HCT116 (cell line): ENCODE measurements at regions of chr7 and their contacts with region 1.

Region 1: GRCh38 chr7:116180302-116180701 is 30.0 kb upstream of the TES start:
- DNase-seq: peak; percentile 43
- ATAC-seq: peak; percentile 85
- H3K4me3 ChIP-seq: no peak overlapping the region
- H3K27ac ChIP-seq: no peak overlapping the region
- H3K4me1 ChIP-seq: no peaks in the 10 kb centered on the region
- H3K27me3 ChIP-seq: no peaks in the 10 kb centered on the region
- CTCF ChIP-seq: peak; percentile 76 to 89 (median 83)
- POLR2A ChIP-seq: no peak
- RAD21 ChIP-seq: peak; percentile 94

Region 2: GRCh38 chr7:116122972-116123595 is 57.2 kb before region 1 on chr7:
- CTCF ChIA-PET with region 1: no interaction called
- POLR2A ChIA-PET with region 1: no interaction called
- RAD21 ChIA-PET with region 1: no interaction called
- intact Hi-C with region 1: no loop called
- DNase-seq: peak; percentile 32
- ATAC-seq: no peak; the same call in 1 of the 2 replicates
- H3K4me3 ChIP-seq: no peak overlapping the region
- H3K27ac ChIP-seq: no peak overlapping the region
- H3K4me1 ChIP-seq: no peaks in the 10 kb centered on the region
- H3K27me3 ChIP-seq: no peaks in the 10 kb centered on the region
- CTCF ChIP-seq: peak; percentile 46 to 79 (median 73); a peak in 5 of 6 replicates
- POLR2A ChIP-seq: no peak
- RAD21 ChIP-seq: peak; percentile 79

Region 3: DNA sequence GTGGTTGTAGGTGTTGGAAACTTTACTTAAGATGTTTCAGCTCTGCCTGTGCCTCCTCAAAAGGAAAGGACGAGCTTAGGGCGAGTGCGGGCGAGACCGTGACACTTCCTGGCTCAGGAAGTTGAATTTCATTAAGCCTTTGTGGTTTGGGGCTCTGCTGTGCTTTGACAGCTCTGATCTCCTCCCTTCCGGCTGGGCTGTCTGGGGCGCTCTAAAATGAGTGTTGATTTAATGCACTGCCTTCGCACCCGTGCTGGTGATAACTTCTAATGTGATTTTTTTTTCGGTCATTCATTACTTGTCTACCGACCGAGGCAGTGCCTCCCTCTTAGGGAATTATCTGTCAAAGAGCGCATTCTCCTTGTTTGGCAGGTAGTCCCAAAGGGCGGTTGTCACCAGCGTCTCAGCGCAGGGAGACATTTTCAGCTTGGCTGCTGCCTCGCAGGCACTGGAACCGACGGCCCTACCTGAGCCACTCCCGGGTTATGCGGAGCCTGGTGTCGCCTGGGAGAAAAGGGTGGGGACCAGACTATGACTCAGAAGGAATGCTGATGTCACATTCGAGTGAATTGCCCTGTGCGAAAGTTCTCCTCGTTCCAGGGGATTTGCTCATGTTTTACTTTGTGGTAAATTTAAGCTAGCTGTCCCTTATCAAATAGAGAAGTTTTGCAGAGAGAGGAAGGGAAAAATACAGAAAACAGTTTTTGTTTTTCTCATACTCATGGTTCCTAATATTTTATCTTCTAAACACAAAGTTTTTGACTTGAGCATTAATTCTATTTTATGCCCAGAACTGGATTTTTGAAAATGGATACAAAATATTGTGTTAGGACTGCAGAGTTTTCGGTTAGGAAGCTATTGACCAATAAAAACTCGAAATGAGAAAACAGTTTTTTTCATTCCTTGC is 31.0 kb after region 1 on chr7:
- CTCF ChIA-PET with region 1: interaction called, 12 read pairs
- POLR2A ChIA-PET with region 1: no interaction called
- RAD21 ChIA-PET with region 1: no interaction called
- intact Hi-C with region 1: no loop called
- DNase-seq: peak; percentile 93
- ATAC-seq: peak; percentile 79
- H3K4me3 ChIP-seq: peak overlapping the region; percentile 76 to 91
- H3K27ac ChIP-seq: peak overlapping the region; percentile 86
- H3K4me1 ChIP-seq: peaks cover 47 to 57% of the 10 kb centered on the region in 2 experiments
- H3K27me3 ChIP-seq: no peaks in the 10 kb centered on the region
- CTCF ChIP-seq: no peak
- POLR2A ChIP-seq: peak; percentile 78
- RAD21 ChIP-seq: no peak

Region 4: GRCh38 chr7:116236020-116236630 is 55.8 kb after region 1 on chr7:
- CTCF ChIA-PET with region 1: interaction called, 71 read pairs
- POLR2A ChIA-PET with region 1: interaction called, 6 read pairs
- RAD21 ChIA-PET with region 1: interaction called, 6 to 8 read pairs
- intact Hi-C with region 1: loop called (anchors 1 kb)
- DNase-seq: no peak
- ATAC-seq: peak; percentile 63
- H3K4me3 ChIP-seq: no peak overlapping the region
- H3K27ac ChIP-seq: no peak overlapping the region; the same call in 1 of the 2 replicates
- H3K4me1 ChIP-seq: peaks cover 7 to 15% of the 10 kb centered on the region in 2 experiments; a peak in 2 of 4 replicates
- H3K27me3 ChIP-seq: no peaks in the 10 kb centered on the region
- CTCF ChIP-seq: peak; percentile 35 to 60 (median 54); a peak in 4 of 6 replicates
- POLR2A ChIP-seq: no peak
- RAD21 ChIP-seq: peak; percentile 70

Region 5: GRCh38 chr7:116249708-116250553 is 69.6 kb after region 1 on chr7:
- CTCF ChIA-PET with region 1: interaction called, 10 read pairs
- POLR2A ChIA-PET with region 1: no interaction called
- RAD21 ChIA-PET with region 1: no interaction called
- intact Hi-C with region 1: no loop called
- DNase-seq: peak; percentile 52
- ATAC-seq: peak; percentile 97
- H3K4me3 ChIP-seq: no peak overlapping the region
- H3K27ac ChIP-seq: no peak overlapping the region
- H3K4me1 ChIP-seq: no peaks in the 10 kb centered on the region; a peak in 1 of 4 replicates
- H3K27me3 ChIP-seq: no peaks in the 10 kb centered on the region
- CTCF ChIP-seq: peak; percentile 21 to 69 (median 68); a peak in 5 of 6 replicates
- POLR2A ChIP-seq: no peak
- RAD21 ChIP-seq: peak; percentile 34; the same call in 1 of the 2 replicates